ENCODE measurements at regions of chr20 and their contacts with region 1.

Region 1: GRCh38 chr20:63009045-63009961 is 2.5 kb upstream of the BHLHE23 start:
- DNase-seq: peak; percentile 87
- ATAC-seq: peak; percentile 92

Region 2: GRCh38 chr20:62900052-62900691 is 109.1 kb before region 1 on chr20:
- intact Hi-C with region 1: loop called (anchors 5 kb)
- DNase-seq: peak; percentile 86
- ATAC-seq: peak; percentile 94

Region 3: GRCh38 chr20:62972270-62973032 is 36.9 kb before region 1 on chr20:
- intact Hi-C with region 1: loop called (anchors 2 kb)
- DNase-seq: peak; percentile 93
- ATAC-seq: peak; percentile 95

Region 4: GRCh38 chr20:63191400-63191799 is 182.1 kb after region 1 on chr20:
- intact Hi-C with region 1: no loop called
- DNase-seq: no peak
- ATAC-seq: no peak

Measured in sciatic nerve (tissue), 2 donors.